Esophagus squamous epithelium (tissue), 5 donors: ENCODE measurements at regions of chr22 and their contacts with region 1.

Region 1: GRCh38 chr22:32796865-32797573 is 4.5 kb upstream of the TIMP3 start:
- DNase-seq: no peak
- H3K4me3 ChIP-seq: no peak overlapping the region
- H3K27ac ChIP-seq: peak overlapping the region in 2 of 4 donors; percentile 30 to 37
- H3K4me1 ChIP-seq: peaks cover 2 to 33% (median 11%) of the 10 kb centered on the region in 3 donors
- H3K27me3 ChIP-seq: peaks cover 0 to 33% (median 2%) of the 10 kb centered on the region in 4 donors
- CTCF ChIP-seq: peak; percentile 27 to 90 (median 84)
- POLR2A ChIP-seq: no peak

Region 2: GRCh38 chr22:32528984-32529982 is 267.7 kb before region 1 on chr22:
- intact Hi-C with region 1: loop called (anchors 5 kb)
- DNase-seq: no peak
- H3K4me3 ChIP-seq: peak overlapping the region in 1 of 4 donors; percentile 18
- H3K27ac ChIP-seq: peak overlapping the region; percentile 34 to 68 (median 60)
- H3K4me1 ChIP-seq: peaks cover 16 to 58% (median 36%) of the 10 kb centered on the region in 3 donors
- H3K27me3 ChIP-seq: no peaks in the 10 kb centered on the region
- CTCF ChIP-seq: peak; percentile 76 to 95 (median 86)
- POLR2A ChIP-seq: no peak

Region 3: DNA sequence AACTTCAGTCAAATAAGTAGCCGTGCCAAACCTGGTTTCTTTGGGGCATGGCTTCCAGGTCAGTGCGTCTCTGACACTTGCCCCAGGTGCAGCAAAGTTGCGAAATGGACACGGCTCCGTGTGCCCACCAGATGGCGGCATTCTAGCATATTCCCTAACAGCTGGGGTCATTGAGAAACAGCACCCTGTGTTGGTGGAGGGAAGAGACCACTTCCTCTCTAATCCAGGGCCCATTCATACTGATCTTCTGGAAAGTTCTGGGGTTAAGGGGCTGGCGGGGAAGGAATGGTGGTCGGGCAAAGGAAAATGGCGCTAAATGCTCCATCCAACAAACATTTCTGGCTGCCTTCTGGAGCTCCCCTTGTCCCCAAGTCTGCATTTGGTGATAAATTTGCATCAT is 136.7 kb before region 1 on chr22:
- intact Hi-C with region 1: loop called (anchors 5 kb)
- DNase-seq: no peak
- H3K4me3 ChIP-seq: no peak overlapping the region
- H3K27ac ChIP-seq: no peak overlapping the region
- H3K4me1 ChIP-seq: peaks cover 0 to 16% (median 7%) of the 10 kb centered on the region in 3 donors
- H3K27me3 ChIP-seq: peaks cover 0 to 4% (median 0%) of the 10 kb centered on the region in 4 donors
- CTCF ChIP-seq: peak; percentile 45 to 82 (median 72)
- POLR2A ChIP-seq: no peak

Region 4: GRCh38 chr22:32850591-32851517 is 53.8 kb after region 1 on chr22:
- intact Hi-C with region 1: no loop called
- DNase-seq: no peak
- H3K4me3 ChIP-seq: no peak overlapping the region
- H3K27ac ChIP-seq: peak overlapping the region; percentile 25 to 92 (median 80)
- H3K4me1 ChIP-seq: peaks cover 6 to 94% (median 54%) of the 10 kb centered on the region in 3 donors
- H3K27me3 ChIP-seq: peaks cover 0 to 8% (median 0%) of the 10 kb centered on the region in 4 donors
- CTCF ChIP-seq: no peak
- POLR2A ChIP-seq: no peak

Region 5: GRCh38 chr22:32985899-32986765 is 189.1 kb after region 1 on chr22:
- intact Hi-C with region 1: loop called (anchors 10 kb)
- DNase-seq: no peak
- H3K4me3 ChIP-seq: no peak overlapping the region
- H3K27ac ChIP-seq: no peak overlapping the region
- H3K4me1 ChIP-seq: peaks cover 5 to 28% (median 6%) of the 10 kb centered on the region in 3 donors
- H3K27me3 ChIP-seq: peaks cover 0 to 7% (median 0%) of the 10 kb centered on the region in 4 donors
- CTCF ChIP-seq: peak; percentile 50 to 88 (median 79)
- POLR2A ChIP-seq: no peak